CD4-positive, alpha-beta T cell (primary cell): ENCODE measurements at regions of chr1 and their contacts with region 1.

Region 1: DNA sequence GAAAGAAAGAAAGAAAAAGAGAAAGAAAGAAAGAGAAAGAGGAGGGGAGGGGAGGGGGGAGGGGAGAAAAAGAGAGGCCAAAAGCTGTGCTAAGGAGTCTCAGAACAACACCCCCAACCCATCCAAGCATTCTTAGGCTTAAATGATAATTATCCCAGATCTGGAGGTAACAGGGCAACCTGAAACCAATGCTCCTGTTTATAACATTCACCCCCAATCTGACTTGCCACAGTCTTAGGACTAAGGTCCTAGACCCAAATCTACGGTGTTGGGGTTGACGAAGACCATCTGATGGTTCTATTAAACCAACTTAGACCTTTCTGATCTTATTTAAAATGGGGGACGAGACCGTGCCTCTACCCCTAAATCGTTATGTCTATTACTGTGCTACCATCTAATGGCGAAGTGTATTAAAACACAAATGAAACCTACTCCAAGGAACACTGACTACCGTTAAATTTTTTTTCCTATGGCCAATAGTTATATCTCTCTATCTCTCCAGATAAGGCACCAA is 119.3 kb upstream of the CDC42BPA start:
- DNase-seq: peak in 2 of 14 experiments; percentile 6 to 11
- ATAC-seq: peak; percentile 46
- H3K4me3 ChIP-seq: no peak overlapping the region
- H3K4me3 Mint-ChIP-seq: no peak overlapping the region
- H3K27ac ChIP-seq: no peak overlapping the region
- H3K27ac Mint-ChIP-seq: no peak overlapping the region
- H3K4me1 ChIP-seq: no peaks in the 10 kb centered on the region
- H3K4me1 Mint-ChIP-seq: no peaks in the 10 kb centered on the region
- H3K27me3 ChIP-seq: no peaks in the 10 kb centered on the region
- H3K27me3 Mint-ChIP-seq: peaks cover 61% of the 10 kb centered on the region
- CTCF ChIP-seq: peak; percentile 31

Region 2: GRCh38 chr1:226547754-226548191 is 889.8 kb before region 1 on chr1:
- CTCF ChIA-PET with region 1: no interaction called
- POLR2A ChIA-PET with region 1: no interaction called
- intact Hi-C with region 1: loop called in 1 of 2 experiments (anchors 10 kb)
- DNase-seq: peak; percentile 33 to 81 (median 56)
- ATAC-seq: peak; percentile 66
- H3K4me3 ChIP-seq: peak overlapping the region; percentile 42
- H3K4me3 Mint-ChIP-seq: peak overlapping the region; percentile 32
- H3K27ac ChIP-seq: no peak overlapping the region
- H3K27ac Mint-ChIP-seq: no peak overlapping the region
- H3K4me1 ChIP-seq: peaks cover 24% of the 10 kb centered on the region
- H3K4me1 Mint-ChIP-seq: peaks cover 14% of the 10 kb centered on the region
- H3K27me3 ChIP-seq: peaks cover 34 to 35% of the 10 kb centered on the region in 2 experiments
- H3K27me3 Mint-ChIP-seq: peaks cover 49% of the 10 kb centered on the region
- CTCF ChIP-seq: peak; percentile 85

Region 3: DNA sequence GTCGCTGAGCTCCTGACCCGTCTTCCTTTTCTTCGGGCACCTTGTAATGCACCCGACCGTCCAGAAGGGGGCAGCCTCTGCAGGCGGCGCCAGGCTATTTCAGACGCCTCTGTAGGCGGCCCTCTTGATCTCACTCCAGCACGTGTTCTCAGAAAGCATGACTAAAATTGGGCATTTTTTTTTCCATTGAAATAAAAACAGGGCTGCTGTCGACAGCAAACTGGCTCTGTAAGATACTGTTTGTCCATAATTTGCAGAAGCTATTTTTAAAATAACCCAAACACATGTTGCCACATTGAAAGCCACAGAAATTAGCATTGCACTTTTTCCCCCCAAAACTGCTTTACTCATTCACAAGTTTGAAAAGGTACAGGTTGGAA is 811.0 kb before region 1 on chr1:
- CTCF ChIA-PET with region 1: no interaction called
- POLR2A ChIA-PET with region 1: no interaction called
- intact Hi-C with region 1: loop called in 1 of 2 experiments (anchors 5 kb)
- DNase-seq: peak; percentile 65 to 88 (median 73)
- ATAC-seq: peak; percentile 97
- H3K4me3 ChIP-seq: peak overlapping the region; percentile 43
- H3K4me3 Mint-ChIP-seq: no peak overlapping the region
- H3K27ac ChIP-seq: no peak overlapping the region
- H3K27ac Mint-ChIP-seq: peak overlapping the region; percentile 46
- H3K4me1 ChIP-seq: peaks cover 18% of the 10 kb centered on the region
- H3K4me1 Mint-ChIP-seq: peaks cover 22% of the 10 kb centered on the region
- H3K27me3 ChIP-seq: no peaks in the 10 kb centered on the region
- H3K27me3 Mint-ChIP-seq: no peaks in the 10 kb centered on the region
- CTCF ChIP-seq: peak; percentile 99

Region 4: GRCh38 chr1:226912587-226913176 is 524.9 kb before region 1 on chr1:
- CTCF ChIA-PET with region 1: no interaction called
- POLR2A ChIA-PET with region 1: no interaction called
- intact Hi-C with region 1: loop called (anchors 5 kb)
- DNase-seq: peak; percentile 7 to 66 (median 32)
- ATAC-seq: peak; percentile 58
- H3K4me3 ChIP-seq: no peak overlapping the region
- H3K4me3 Mint-ChIP-seq: no peak overlapping the region
- H3K27ac ChIP-seq: no peak overlapping the region
- H3K27ac Mint-ChIP-seq: no peak overlapping the region
- H3K4me1 ChIP-seq: peaks cover 2% of the 10 kb centered on the region
- H3K4me1 Mint-ChIP-seq: no peaks in the 10 kb centered on the region
- H3K27me3 ChIP-seq: no peaks in the 10 kb centered on the region
- H3K27me3 Mint-ChIP-seq: no peaks in the 10 kb centered on the region
- CTCF ChIP-seq: peak; percentile 54

Region 5: GRCh38 chr1:227447531-227447990 is 10.0 kb after region 1 on chr1:
- CTCF ChIA-PET with region 1: no interaction called
- POLR2A ChIA-PET with region 1: no interaction called
- intact Hi-C with region 1: no loop called
- DNase-seq: no peak
- ATAC-seq: no peak
- H3K4me3 ChIP-seq: no peak overlapping the region
- H3K4me3 Mint-ChIP-seq: no peak overlapping the region
- H3K27ac ChIP-seq: no peak overlapping the region
- H3K27ac Mint-ChIP-seq: no peak overlapping the region
- H3K4me1 ChIP-seq: no peaks in the 10 kb centered on the region
- H3K4me1 Mint-ChIP-seq: no peaks in the 10 kb centered on the region
- H3K27me3 ChIP-seq: peaks cover 0 to 14% of the 10 kb centered on the region in 2 experiments
- H3K27me3 Mint-ChIP-seq: peaks cover 54% of the 10 kb centered on the region
- CTCF ChIP-seq: no peak